ENCODE measurements at regions of chr11 and their contacts with region 1.

Region 1: DNA sequence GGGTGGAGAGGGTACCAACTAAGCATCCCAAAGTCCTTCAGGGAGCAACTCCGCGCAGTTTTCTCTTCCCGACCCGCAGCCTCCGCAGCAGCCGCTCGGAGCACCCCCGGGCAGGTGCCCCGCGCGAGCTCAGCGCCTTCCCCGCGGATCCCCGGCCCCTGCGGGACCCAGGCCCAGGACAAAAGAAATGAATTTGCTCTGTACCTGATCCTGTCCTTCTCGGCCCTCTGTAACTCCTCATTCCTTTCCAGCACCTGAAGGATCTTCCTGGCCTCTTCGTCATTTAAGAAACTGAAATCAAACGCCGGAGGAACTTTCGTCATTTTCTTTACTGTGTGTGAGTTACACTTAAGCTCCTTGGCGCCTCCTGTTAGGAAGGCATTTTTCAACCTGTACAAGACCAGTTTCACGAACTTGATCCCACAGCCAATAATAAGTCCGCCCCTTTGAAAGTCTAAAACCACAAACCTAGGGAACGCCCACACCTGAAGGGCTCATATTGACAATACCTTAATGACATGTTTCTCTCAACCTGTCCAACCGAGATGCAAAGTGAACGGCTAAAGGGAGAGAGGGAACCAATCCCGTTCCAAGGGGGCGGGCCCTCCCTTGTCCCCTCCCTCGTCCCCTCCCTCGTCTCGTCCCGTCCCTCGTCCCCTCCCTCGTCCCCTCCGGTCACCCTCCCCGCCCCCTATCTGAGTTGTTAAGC is at the start of gene EXPH5:
- DNase-seq: peak; percentile 80
- H3K4me3 ChIP-seq: peak within 1 kb of the TSS; percentile 47 to 96 (median 81)
- H3K27ac ChIP-seq: no peak within 1 kb of the TSS
- H3K4me1 ChIP-seq: peaks cover 3% of the 10 kb centered on the region
- H3K27me3 ChIP-seq: peaks cover 24 to 35% of the 10 kb centered on the region in 2 experiments
- CTCF ChIP-seq: no peak
- POLR2A ChIP-seq: no peak
- total RNA-seq, gene EXPH5: 0.09 TPM in 1 of 2 replicates, not detected in the other

Region 2: GRCh38 chr11:108616567-108616966 is 23.2 kb after region 1 on chr11:
- CTCF ChIA-PET with region 1: no interaction called
- POLR2A ChIA-PET with region 1: no interaction called
- dilution Hi-C with region 1: no loop called
- intact Hi-C with region 1: loop called (anchors 1 kb)
- DNase-seq: peak; percentile 65
- H3K4me3 ChIP-seq: no peak overlapping the region
- H3K27ac ChIP-seq: peak overlapping the region; percentile 63
- H3K4me1 ChIP-seq: peaks cover 9% of the 10 kb centered on the region
- H3K27me3 ChIP-seq: no peaks in the 10 kb centered on the region
- CTCF ChIP-seq: no peak
- POLR2A ChIP-seq: no peak

Measured in endothelial cell of umbilical vein (primary cell).